ENCODE measurements at regions of chr14 and their contacts with region 1.

Region 1: DNA sequence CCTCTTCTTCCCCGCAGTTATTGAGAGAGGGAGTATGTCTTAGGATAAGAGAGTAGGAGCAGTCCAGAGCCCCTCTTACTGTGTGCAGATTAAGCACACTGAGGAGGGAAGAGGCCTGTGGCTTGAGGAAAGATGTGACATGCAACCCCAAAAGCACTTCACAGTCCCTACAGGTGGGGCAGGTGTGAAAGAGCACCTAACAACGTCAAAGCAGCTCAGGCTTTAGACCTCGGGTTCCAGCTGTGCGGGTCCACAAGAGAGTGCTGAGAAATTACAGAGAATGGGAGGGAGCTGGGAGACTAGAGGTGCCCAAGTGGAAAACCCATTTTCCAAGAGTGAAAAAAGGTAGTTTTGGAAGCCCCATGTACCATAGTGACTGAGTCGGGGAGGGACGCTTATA is 127.6 kb downstream of the SLC25A47 start:
- DNase-seq: no peak
- H3K4me3 ChIP-seq: no peak overlapping the region
- H3K27ac ChIP-seq: no peak overlapping the region
- H3K4me1 ChIP-seq: peaks cover 5% of the 10 kb centered on the region
- H3K27me3 ChIP-seq: no peaks in the 10 kb centered on the region
- CTCF ChIP-seq: no peak

Region 2: DNA sequence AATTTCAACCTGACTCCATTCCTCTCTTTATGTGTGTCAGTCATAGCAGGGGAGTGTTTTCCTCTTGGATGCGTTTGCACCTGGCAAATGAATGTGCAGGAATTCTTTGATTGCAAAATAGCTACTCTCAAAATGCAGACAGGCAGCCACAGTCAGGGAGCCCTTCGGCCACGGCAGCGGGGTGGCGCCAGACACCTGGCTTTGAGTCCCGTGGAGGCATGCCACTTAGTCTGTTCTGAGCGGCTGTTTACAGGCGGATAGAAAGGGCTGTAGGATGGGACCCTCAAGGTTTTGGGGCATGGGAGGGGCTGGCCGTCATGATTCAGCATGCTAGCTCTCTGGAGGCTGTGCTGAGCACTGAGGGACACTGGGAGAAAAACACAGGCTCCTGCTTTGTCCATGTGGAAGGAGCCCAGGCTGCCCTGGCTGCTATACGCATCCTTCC is 10.5 kb before region 1 on chr14:
- CTCF ChIA-PET with region 1: no interaction called
- POLR2A ChIA-PET with region 1: interaction called, 11 read pairs
- intact Hi-C with region 1: no loop called
- DNase-seq: peak; percentile 62
- H3K4me3 ChIP-seq: no peak overlapping the region
- H3K27ac ChIP-seq: no peak overlapping the region
- H3K4me1 ChIP-seq: peaks cover 28% of the 10 kb centered on the region
- H3K27me3 ChIP-seq: no peaks in the 10 kb centered on the region
- CTCF ChIP-seq: peak; percentile 68